IMR-90 (cell line): ENCODE measurements at regions of chr19 and their contacts with region 1.

Region 1: GRCh38 chr19:53195265-53195903 is 2.2 kb upstream of the ZNF665 start:
- DNase-seq: peak; percentile 81
- ATAC-seq: peak; percentile 43
- H3K4me3 ChIP-seq: no peak overlapping the region
- H3K27ac ChIP-seq: no peak overlapping the region
- H3K4me1 ChIP-seq: peaks cover 6% of the 10 kb centered on the region; the same call in 1 of the 2 replicates
- H3K27me3 ChIP-seq: no peaks in the 10 kb centered on the region
- CTCF ChIP-seq: peak; percentile 93
- POLR2A ChIP-seq: no peak
- RAD21 ChIP-seq: peak; percentile 91

Region 2: GRCh38 chr19:52993323-52994178 is 201.8 kb before region 1 on chr19:
- CTCF ChIA-PET with region 1: interaction called, 4 read pairs
- POLR2A ChIA-PET with region 1: no interaction called
- dilution Hi-C with region 1: no loop called
- in situ Hi-C with region 1: no loop called
- intact Hi-C with region 1: loop called (anchors 10 kb)
- DNase-seq: peak; percentile 66
- ATAC-seq: peak; percentile 93
- H3K4me3 ChIP-seq: peak overlapping the region; percentile 59
- H3K27ac ChIP-seq: peak overlapping the region; percentile 58
- H3K4me1 ChIP-seq: 0 out of 2 replicates have a peak, but pooled peaks cover 3% of the 10 kb centered on the region
- H3K27me3 ChIP-seq: no peaks in the 10 kb centered on the region
- CTCF ChIP-seq: peak; percentile 59
- POLR2A ChIP-seq: no peak
- RAD21 ChIP-seq: no peak; the same call in 1 of the 2 replicates

Region 3: DNA sequence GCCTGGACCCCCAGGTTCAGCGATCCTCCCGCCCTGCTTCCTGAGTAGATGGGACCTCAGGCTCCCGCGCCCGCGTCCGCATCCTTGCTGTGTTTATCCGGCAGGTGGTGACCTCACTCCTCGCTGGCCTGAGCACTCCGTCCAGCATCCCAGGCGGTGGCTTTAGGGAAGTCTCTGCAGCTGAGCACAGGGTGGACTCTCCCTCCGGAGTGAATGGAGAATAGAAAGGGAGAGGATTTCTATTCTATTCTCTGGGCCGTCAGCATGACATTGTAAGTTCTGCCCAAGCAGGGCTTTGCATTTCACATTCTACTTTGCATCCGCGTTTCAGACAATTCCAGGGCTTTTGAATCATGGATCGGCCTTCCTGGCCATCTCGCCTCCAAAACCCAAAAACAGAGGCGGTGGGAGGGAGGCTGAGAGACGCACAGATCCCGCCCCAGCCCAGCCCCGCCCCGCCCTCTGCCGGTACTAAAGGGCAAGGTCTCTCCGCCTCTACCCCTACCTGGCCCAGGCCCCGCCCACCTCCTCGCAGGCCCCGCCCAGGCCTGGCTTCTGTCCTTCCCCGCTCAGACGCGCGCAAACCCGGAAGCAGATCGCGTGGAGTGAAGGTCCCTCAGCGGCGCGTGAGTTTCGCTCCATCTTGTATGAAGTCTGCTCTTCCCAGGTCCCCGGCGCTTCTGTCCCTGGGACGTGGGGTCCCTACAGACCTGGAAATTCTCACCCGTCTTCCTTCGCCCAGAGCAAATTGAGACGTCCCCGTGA is 169.9 kb after region 1 on chr19 and contains the start of gene ZNF525:
- CTCF ChIA-PET with region 1: no interaction called
- POLR2A ChIA-PET with region 1: no interaction called
- dilution Hi-C with region 1: no loop called
- in situ Hi-C with region 1: no loop called
- intact Hi-C with region 1: loop called (anchors 5 kb)
- DNase-seq: peak; percentile 59
- ATAC-seq: peak; percentile 98
- H3K4me3 ChIP-seq: peak within 1 kb of the TSS; percentile 55
- H3K27ac ChIP-seq: peak within 1 kb of the TSS; percentile 24; the same call in 1 of the 2 replicates
- H3K4me1 ChIP-seq: no peaks in the 10 kb centered on the region
- H3K27me3 ChIP-seq: no peaks in the 10 kb centered on the region
- CTCF ChIP-seq: 0 out of 2 replicates have a peak, but pooled peaks have one; percentile 17
- POLR2A ChIP-seq: peak; percentile 49
- RAD21 ChIP-seq: peak; percentile 23
- total RNA-seq, gene ZNF525: 4.5 and 6.7 TPM in 2 replicates

Region 4: GRCh38 chr19:53424968-53425597 is 229.7 kb after region 1 on chr19:
- CTCF ChIA-PET with region 1: no interaction called
- POLR2A ChIA-PET with region 1: no interaction called
- dilution Hi-C with region 1: no loop called
- in situ Hi-C with region 1: no loop called
- intact Hi-C with region 1: loop called (anchors 10 kb)
- DNase-seq: peak; percentile 65
- ATAC-seq: peak; percentile 94
- H3K4me3 ChIP-seq: no peak overlapping the region
- H3K27ac ChIP-seq: no peak overlapping the region
- H3K4me1 ChIP-seq: no peaks in the 10 kb centered on the region
- H3K27me3 ChIP-seq: no peaks in the 10 kb centered on the region
- CTCF ChIP-seq: peak; percentile 78
- POLR2A ChIP-seq: no peak
- RAD21 ChIP-seq: peak; percentile 71

Region 5: DNA sequence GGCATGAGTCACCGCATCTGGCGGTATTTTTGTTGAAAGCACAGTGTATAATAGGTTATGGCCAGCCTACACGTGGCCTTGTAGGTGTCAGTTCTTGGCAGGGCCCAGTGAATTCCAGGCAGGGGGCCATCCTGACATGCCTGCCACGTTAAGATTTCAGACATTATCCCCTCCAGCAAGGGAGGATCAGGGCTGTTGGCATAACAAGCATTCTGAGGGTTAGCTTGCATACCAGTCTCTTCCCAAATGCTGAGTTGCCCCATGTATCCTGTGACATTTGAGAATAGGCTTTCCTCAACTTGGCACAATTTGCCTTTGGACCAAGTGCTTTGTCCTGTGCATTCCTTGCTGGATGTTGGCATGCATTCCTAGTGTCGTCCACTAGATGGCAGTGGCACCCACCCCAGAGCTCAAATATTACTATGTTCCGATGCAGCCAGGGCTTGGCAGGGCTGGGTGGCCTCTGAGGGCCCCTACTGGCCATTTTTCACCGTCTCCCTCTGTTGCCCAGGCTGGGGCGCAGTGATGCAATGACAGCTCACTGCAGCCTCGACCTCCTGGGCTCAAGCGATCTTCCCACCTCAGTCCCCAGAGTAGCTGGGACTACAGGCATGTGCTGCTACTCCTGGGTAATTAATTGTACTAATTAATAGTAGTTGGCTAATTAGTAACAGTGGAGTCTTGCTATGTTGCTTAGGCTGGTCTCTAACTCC is 597.5 kb after region 1 on chr19:
- CTCF ChIA-PET with region 1: no interaction called
- POLR2A ChIA-PET with region 1: no interaction called
- dilution Hi-C with region 1: no loop called
- in situ Hi-C with region 1: no loop called
- intact Hi-C with region 1: loop called (anchors 5 kb)
- DNase-seq: peak; percentile 75
- ATAC-seq: peak; percentile 100
- H3K4me3 ChIP-seq: no peak overlapping the region
- H3K27ac ChIP-seq: no peak overlapping the region
- H3K4me1 ChIP-seq: no peaks in the 10 kb centered on the region
- H3K27me3 ChIP-seq: no peaks in the 10 kb centered on the region
- CTCF ChIP-seq: peak; percentile 96
- POLR2A ChIP-seq: no peak
- RAD21 ChIP-seq: peak; percentile 74

Region 6: DNA sequence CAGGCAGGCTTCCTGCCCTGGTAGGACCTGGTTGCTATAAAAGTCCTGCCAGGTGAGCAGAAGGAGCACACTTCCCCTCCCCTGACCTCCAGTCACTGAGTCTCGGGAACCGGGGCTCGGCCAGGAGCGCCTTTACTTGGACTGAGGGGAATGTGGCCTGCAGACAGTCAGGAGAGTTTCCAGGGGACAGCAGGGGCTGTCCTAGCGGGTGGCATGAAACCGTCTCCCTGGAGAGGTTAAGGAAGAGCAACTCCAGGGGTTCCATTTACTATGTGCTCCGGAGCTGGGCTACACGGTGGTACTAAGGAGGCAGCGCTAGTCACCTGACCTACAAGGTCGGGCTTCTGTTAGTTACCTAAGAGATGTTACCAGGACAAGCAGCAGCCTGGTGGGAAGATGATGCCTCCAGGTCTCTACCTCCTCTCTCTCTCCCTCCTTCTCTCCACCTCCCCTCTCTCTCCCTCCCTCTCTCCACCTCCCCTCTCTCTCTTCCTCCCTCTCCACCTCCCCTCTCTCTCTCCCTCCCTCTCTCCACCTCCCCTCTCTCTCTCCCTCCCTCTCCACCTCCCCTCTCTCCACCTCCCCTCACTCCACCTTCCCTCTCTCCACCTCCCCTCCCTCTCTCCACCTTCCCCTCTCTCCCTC is 938.0 kb after region 1 on chr19:
- CTCF ChIA-PET with region 1: no interaction called
- POLR2A ChIA-PET with region 1: no interaction called
- dilution Hi-C with region 1: no loop called
- in situ Hi-C with region 1: no loop called
- intact Hi-C with region 1: no loop called
- DNase-seq: no peak
- ATAC-seq: no peak
- H3K4me3 ChIP-seq: no peak overlapping the region
- H3K27ac ChIP-seq: no peak overlapping the region
- H3K4me1 ChIP-seq: peaks cover 5% of the 10 kb centered on the region; the same call in 1 of the 2 replicates
- H3K27me3 ChIP-seq: no peaks in the 10 kb centered on the region
- CTCF ChIP-seq: no peak
- POLR2A ChIP-seq: no peak
- RAD21 ChIP-seq: no peak